Activated T-helper 1 cell treated with anti-CD3 and anti-CD28 coated beads, Interleukin-12 subunit alpha, Interleukin-12 subunit beta, Interleukin-2, Interleukin-4 antibody, amounts not matched to agents 30 ng/mL and 10 ng/mL and 1 ng/mL, durations not matched to agents 14 hours and 24 hours and 36 hours (primary cell): ENCODE measurements at regions of chr17 and their contacts with region 1.

Region 1: GRCh38 chr17:4703330-4703691 is 626 bp downstream of the PELP1 start:
- DNase-seq: no peak
- H3K4me3 Mint-ChIP-seq: peak overlapping the region; percentile 90
- H3K27ac Mint-ChIP-seq: peak overlapping the region; percentile 69
- H3K4me1 Mint-ChIP-seq: peaks cover 48% of the 10 kb centered on the region
- H3K27me3 Mint-ChIP-seq: no peaks in the 10 kb centered on the region

Region 2: GRCh38 chr17:4739122-4740024 is 36.1 kb after region 1 on chr17 and contains the starts of genes CXCL16 and ZMYND15:
- intact Hi-C with region 1: loop called (anchors 5 kb)
- DNase-seq: peak; percentile 48
- H3K4me3 Mint-ChIP-seq: peak within 1 kb of the TSS; percentile 81
- H3K27ac Mint-ChIP-seq: peak within 1 kb of the TSS; percentile 61
- H3K4me1 Mint-ChIP-seq: peaks cover 19% of the 10 kb centered on the region
- H3K27me3 Mint-ChIP-seq: peaks cover 28% of the 10 kb centered on the region
- total RNA-seq, gene CXCL16: 3.7 and 7.0 TPM in 2 replicates
- total RNA-seq, gene ZMYND15: 0.18 TPM in 1 of 2 replicates, not detected in the other